ENCODE measurements at regions of chr7 and their contacts with region 1.

Region 1: GRCh38 chr7:113907617-113908016 is 11.2 kb downstream of the PPP1R3A start:
- DNase-seq: no peak
- ATAC-seq: no peak
- H3K4me3 ChIP-seq: no peak overlapping the region
- H3K27ac ChIP-seq: no peak overlapping the region
- H3K4me1 ChIP-seq: peaks cover 0 to 23% (median 0%) of the 10 kb centered on the region in 9 donors
- H3K27me3 ChIP-seq: no peaks in the 10 kb centered on the region
- CTCF ChIP-seq: no peak

Region 2: GRCh38 chr7:112678626-112679025 is 1229.0 kb before region 1 on chr7:
- intact Hi-C with region 1: loop called in 1 of 10 experiments (anchors 5 kb)
- DNase-seq: no peak
- ATAC-seq: no peak
- H3K4me3 ChIP-seq: no peak overlapping the region
- H3K27ac ChIP-seq: no peak overlapping the region
- H3K4me1 ChIP-seq: no peaks in the 10 kb centered on the region
- H3K27me3 ChIP-seq: no peaks in the 10 kb centered on the region
- CTCF ChIP-seq: no peak

Region 3: DNA sequence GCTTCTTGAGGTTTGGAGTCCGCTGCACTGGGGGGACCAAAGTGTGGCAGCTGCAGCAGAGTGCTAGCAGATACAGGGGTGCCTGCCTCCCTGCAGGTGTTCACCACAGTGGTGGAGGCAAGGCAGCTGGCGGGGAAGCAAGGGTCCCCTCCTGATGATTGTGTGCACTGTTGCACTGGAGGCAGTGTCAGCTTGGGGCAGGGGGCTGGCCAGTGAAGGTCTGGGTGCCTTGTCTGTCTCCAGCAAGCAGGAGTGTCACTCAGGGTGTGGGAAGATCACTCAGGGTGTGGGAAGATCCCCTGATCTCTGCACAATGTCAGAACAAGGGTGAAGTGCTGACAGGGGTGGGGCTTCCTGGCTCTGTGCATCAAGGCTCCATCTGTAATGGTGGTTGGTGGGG is 47.5 kb after region 1 on chr7:
- intact Hi-C with region 1: no loop called
- DNase-seq: no peak
- ATAC-seq: no peak
- H3K4me3 ChIP-seq: no peak overlapping the region
- H3K27ac ChIP-seq: no peak overlapping the region
- H3K4me1 ChIP-seq: no peaks in the 10 kb centered on the region
- H3K27me3 ChIP-seq: no peaks in the 10 kb centered on the region
- CTCF ChIP-seq: no peak

Measured in heart right ventricle (tissue), 16 donors.